GM13977 (cell line): ENCODE measurements at regions of chrX and their contacts with region 1.

Region 1: DNA sequence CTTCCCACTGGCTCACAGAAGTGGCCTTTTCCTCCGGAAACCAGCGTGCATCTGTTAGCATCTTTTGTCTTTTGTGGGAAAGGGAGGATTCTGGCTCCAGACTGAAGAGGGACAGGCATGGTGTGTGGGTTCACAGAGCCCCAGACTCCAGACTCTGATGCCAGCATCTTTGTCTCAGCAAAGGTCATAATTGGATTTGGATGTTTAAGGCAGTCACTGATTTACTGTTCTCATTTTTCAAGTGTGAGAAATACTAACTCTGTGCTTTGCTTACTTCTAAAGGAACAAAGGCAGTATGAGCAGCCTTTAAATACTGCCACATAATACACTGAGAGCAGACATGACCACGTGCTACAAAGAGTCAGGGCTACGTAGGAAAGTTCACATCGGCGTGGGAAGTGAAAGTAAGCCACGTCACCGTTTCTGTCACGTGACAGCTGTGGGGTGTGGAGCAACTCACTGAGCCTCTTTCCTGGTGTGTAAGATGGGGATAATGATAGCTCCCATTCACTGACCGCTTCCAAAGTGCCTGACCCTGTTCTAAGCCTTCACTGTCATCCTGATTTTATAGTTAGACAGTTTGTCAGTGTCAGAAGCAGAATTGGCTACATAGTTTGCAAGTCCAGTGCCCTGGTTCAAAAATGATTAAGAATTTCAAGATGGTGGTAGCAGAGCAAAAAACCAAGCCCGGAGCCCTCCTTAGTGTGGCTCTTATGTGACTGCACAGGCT is 24.8 kb upstream of the TMSB4X start:
- DNase-seq: peak; percentile 60
- CTCF ChIP-seq: no peak

Region 2: GRCh38 chrX:13120017-13120416 is 169.9 kb after region 1 on chrX:
- in situ Hi-C with region 1: no loop called
- DNase-seq: no peak
- CTCF ChIP-seq: no peak

Region 3: DNA sequence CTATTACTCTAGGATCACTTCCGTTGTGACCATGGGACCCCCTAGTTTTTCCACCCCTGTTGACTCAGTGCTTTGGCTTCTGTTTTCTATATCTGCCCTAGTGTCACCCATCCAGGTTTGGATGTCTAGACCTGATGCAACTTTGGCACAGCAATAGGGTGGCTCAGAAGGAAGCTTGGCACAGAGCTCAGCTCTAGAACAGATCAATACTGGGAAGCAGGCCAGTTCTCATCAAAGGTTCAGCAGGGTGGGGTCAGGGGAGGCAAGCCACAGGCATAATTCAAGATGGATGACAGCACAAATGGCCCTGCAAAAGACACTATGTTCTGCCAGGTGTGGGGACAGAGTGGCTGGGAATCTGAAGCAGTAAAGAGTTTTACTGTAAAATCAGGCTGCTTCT is 545.1 kb after region 1 on chrX:
- in situ Hi-C with region 1: loop called (anchors 10 kb)
- DNase-seq: no peak
- CTCF ChIP-seq: no peak